SK-N-SH (cell line): ENCODE measurements at regions of chr11 and their contacts with region 1.

Region 1: DNA sequence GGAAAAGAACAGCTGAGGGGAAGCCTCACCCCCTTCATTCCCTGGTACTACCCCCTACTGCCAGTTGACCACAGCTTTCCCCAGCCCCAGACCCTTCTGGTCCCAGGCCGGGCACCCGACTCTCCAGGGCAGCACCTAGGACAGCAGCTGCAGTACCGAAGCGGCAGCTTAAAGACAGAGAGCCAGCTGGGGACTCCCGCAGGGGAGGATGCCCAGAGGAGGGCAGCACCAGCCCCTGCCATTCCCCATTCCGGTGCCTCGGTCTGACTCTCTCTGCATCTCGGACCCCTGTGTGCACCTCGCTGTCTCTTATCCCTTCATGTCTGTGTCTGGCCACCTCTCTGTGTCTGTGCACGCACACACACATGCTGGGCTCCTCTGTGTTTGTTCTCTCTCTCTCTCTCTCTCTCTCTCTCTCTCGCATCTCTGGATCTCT is 9.4 kb downstream of the IGSF9B start:
- DNase-seq: peak; percentile 77
- H3K4me3 ChIP-seq: peak overlapping the region in 1 of 2 experiments; percentile 15; a peak in 1 of 4 replicates
- H3K27ac ChIP-seq: peak overlapping the region in 1 of 2 experiments; percentile 89; a peak in 2 of 4 replicates
- H3K4me1 ChIP-seq: peaks cover 0 to 100% of the 10 kb centered on the region in 2 experiments; a peak in 1 of 4 replicates
- H3K27me3 ChIP-seq: no peaks in the 10 kb centered on the region; the same call in 1 of the 2 replicates
- CTCF ChIP-seq: peak; percentile 53
- EP300 ChIP-seq: no peak
- RAD21 ChIP-seq: peak; percentile 61

Region 2: DNA sequence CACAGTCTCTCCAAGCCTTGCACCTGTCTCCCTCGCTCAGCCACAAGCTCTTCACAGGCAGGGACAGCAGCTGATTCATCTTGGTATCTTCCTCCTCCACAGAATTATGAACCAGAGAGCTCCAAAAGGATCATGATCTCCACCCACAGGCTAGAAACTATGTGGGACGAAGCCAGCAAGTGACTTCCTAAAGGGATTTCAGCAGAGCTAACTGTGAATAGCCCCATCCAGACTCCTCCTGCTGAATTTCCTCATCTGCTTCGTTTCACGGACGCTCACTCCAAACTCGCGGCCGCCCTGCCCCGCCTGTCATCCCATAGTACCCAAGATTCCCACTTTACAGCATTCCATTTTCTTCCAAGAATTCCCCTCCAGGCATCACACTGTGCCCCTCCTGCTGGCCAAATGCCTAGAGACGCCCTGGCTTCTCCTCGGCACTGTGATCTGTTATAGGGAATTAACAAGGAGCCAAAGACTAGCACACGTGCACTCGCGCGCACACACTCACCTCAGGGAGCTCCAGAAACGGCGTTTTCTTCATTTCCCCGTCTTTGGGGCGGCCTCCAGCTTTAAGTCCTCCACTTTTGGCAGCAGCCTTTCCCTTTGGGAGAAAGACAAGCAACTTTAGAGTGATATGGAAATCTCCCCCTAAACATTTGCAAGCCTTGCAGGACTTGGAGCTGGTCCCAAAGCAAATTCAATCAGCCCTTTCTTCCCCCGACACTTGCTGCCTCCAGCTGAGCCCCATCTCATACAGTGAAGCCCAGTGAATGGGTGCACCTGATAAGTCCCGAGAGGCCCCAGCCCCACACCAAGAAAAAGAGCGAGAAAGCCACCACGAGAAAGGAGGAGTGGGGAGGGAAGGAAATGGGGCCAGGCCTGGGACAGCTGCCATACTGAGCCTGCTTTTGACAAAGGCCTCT is 137.5 kb before region 1 on chr11:
- CTCF ChIA-PET with region 1: no interaction called
- POLR2A ChIA-PET with region 1: no interaction called
- DNase-seq: no peak
- H3K4me3 ChIP-seq: no peak overlapping the region
- H3K27ac ChIP-seq: no peak overlapping the region
- H3K4me1 ChIP-seq: peaks cover 0 to under 1% of the 10 kb centered on the region in 2 experiments; a peak in 1 of 4 replicates
- H3K27me3 ChIP-seq: no peaks in the 10 kb centered on the region
- CTCF ChIP-seq: no peak
- EP300 ChIP-seq: no peak
- RAD21 ChIP-seq: no peak

Region 3: DNA sequence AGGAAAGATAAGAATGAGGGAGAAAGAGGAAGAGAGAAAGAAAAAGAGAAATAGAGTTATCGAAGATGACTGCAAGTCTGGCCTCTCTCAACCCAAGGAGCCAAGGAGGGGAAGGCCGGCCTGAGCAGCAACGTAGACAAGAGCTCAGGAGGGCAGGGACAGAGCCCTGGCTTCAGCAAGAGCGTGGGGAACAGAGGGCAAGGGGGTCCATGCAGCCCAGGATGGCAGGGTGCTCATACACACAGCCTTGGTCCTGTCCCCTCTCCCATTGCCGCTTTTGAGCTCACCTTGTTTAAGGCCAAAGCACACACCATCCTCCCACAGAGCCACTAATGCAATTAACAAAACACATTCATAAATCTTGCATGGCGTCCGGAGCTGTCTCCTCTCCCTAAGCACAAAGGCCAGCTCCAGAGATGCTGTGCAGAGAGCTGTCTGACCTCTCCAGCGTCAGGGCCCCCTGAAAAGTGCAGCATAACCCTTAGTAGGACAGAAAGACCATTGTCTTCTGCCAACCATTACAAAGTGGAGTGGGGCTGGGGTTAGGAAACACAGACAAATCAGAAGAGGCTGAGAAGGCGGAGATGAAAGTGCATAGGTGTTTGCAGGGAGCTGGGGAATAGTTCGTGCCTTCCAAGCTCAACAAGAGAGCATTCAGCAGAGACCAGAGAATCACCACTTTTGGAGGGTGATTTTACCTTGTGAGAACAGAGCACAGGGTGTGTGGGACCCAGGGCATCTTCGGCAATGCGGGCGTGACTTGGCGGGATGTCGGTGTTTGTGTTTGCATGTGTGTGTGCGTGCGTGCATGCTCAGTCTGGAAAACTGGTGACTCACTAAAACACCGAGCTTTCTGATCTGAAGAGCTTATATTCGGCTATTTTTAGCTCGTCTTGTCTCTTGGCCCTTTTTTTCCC is 93.3 kb after region 1 on chr11:
- CTCF ChIA-PET with region 1: interaction called, 72 read pairs
- POLR2A ChIA-PET with region 1: interaction called, 69 read pairs
- DNase-seq: no peak
- H3K4me3 ChIP-seq: no peak overlapping the region
- H3K27ac ChIP-seq: no peak overlapping the region; a peak in 1 of 4 replicates
- H3K4me1 ChIP-seq: peaks cover 3 to 52% of the 10 kb centered on the region in 2 experiments; a peak in 2 of 4 replicates
- H3K27me3 ChIP-seq: no peaks in the 10 kb centered on the region
- CTCF ChIP-seq: no peak
- EP300 ChIP-seq: no peak
- RAD21 ChIP-seq: no peak